AG04449 (cell line): ENCODE measurements at regions of chr6 and their contacts with region 1.

Region 1: GRCh38 chr6:33014841-33015634 is 5.6 kb upstream of the HLA-DOA start:
- DNase-seq: peak; percentile 55
- H3K4me3 ChIP-seq: no peak overlapping the region
- CTCF ChIP-seq: peak; percentile 61

Region 2: DNA sequence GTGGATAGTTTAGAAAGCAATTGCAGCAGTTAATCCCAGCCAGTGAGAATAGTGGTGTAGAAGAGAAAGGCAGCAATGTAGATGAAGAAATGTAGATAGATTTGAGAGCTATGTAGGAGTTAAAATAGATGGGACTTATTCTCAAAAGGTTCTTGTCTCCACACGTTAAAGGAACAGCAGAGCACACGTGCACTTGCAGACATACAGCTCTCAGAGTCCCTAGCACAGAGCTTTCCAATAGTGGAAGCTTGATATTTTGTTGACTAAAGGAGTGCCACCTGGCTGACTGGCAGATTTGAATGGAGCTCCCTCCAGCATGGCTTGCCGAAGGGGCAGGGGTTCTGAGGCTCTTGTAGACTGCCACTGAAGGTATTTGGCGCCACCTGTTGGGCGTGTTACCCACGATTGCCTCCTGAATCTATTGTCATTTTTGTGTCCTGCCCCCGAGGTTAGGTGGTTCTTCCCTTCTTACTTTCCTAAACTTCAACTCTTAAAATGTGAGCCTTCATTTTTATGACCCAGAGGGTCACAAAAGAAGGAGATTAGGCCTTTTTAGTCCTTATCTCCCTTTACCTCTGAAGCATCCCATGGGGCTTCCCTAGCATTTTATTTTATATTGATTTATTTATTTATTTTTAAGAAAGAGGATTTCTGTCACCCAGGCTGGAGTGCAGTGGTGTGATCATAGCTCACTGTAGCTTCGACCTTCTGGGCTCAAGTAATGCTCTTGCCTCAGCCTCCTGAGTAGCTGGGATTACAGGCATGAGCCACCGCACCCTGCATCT is 30.2 kb before region 1 on chr6:
- CTCF ChIA-PET with region 1: interaction called, 10 read pairs
- POLR2A ChIA-PET with region 1: no interaction called
- DNase-seq: no peak
- H3K4me3 ChIP-seq: no peak overlapping the region
- CTCF ChIP-seq: peak; percentile 82

Region 3: DNA sequence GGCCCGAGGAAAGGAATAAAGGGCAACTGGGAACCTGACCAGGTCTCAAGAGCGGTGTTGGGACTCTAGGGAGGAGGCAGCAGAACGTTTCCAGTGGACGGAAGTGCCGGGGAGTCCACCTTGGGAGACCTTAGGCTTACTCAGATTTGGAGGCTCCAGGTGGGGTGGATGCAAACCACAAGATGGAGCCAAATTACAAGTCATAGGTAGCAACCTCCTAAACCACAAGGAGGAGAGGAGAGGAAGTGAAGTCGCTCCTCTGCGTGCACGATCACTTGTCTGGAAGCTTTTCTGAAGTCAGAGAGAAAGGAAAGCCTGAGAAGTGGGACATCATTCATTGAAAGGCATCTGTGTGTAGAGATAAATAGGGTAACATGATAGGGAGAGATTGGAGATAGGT is 15.0 kb before region 1 on chr6:
- CTCF ChIA-PET with region 1: interaction called, 14 read pairs
- POLR2A ChIA-PET with region 1: no interaction called
- DNase-seq: no peak
- H3K4me3 ChIP-seq: no peak overlapping the region
- CTCF ChIP-seq: no peak

Region 4: DNA sequence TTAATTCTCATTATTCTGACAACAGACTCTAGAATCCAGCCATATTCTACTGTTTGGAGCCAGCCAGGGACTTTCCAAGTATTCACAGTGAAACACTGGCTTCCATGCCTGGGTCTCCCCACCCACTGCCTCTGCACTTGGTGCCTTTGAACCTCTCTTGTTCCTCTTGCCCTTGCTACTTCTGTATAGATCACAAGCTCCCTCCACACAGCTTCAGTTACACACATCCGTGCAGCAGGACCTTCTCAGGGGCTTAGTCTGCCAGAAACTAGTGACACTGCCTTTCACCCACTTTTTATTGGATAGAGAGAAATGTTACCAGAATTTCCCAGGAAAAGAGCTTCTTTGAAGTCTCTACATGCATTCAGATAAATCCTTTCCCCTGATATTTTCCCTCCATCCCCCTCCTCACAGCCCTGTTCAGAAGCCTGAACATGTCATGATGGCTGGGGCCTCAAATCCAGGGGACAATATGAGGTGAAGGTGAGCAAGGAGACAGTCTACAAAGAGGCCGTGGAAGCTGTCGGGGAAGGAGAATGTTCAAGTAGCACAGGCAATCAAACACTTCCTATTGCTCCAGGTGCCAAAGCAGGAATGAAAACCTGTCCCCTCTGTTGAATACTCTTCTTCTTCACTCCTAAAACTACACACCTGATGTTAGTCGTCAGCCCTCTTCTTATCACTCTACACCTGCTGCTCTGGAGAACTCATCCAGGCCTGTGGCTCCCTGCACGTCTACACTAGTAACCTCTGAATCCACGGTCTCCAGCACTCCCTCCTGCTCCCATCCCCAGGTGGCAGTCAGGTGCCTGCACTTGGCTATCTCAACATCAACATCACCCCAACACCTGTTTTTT is 14.5 kb after region 1 on chr6:
- CTCF ChIA-PET with region 1: interaction called, 14 read pairs
- POLR2A ChIA-PET with region 1: no interaction called
- DNase-seq: no peak
- H3K4me3 ChIP-seq: no peak overlapping the region
- CTCF ChIP-seq: no peak

Region 5: GRCh38 chr6:33082702-33083101 is 67.7 kb after region 1 on chr6:
- CTCF ChIA-PET with region 1: interaction called, 61 read pairs
- POLR2A ChIA-PET with region 1: no interaction called
- DNase-seq: no peak
- H3K4me3 ChIP-seq: no peak overlapping the region
- CTCF ChIP-seq: peak; percentile 58

Region 6: GRCh38 chr6:33147807-33148666 is 133.0 kb after region 1 on chr6:
- CTCF ChIA-PET with region 1: interaction called, 66 read pairs
- POLR2A ChIA-PET with region 1: no interaction called
- DNase-seq: no peak
- H3K4me3 ChIP-seq: no peak overlapping the region
- CTCF ChIP-seq: peak; percentile 69

Region 7: DNA sequence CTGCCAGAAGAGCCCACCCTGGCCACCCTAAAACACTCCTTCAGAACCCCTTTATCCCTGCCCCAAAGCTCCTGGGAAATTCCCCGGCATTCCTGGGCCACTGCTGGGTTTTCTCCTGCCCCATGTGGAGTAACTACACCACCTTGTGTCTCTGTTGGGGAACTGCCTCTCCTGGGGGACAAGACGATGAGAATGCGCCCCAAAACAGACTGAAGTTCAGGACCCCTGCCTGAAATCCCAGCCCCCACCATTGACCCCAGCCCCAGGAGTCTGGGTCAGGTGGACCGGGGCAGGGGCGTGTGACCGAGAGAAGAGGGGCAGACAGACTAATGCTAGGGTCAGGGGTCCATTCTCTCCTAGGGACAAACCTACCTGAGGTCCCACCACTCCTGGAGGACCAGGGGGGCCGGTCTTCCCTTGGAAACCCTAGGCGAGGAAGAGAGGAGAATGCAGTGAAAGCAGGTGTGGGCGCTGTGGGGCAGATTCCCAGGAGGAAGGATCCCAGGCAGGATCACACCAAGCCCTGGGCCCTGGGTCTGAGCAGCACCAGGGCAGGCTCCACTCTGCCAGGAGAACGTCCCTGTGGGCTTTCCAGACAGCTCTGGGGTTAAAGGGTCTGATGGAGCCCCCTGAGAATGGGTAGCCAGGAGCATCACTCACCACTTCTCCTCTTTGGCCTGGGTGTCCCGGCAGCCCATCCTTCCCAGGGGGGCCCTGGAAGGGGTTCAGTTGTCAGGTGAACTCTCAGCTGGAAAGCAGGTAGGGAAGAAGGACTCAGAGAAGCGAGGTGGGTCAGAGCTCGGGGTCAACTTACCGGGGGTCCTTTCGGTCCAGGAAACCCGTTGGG is 157.9 kb after region 1 on chr6:
- CTCF ChIA-PET with region 1: interaction called, 44 read pairs
- POLR2A ChIA-PET with region 1: no interaction called
- DNase-seq: no peak
- H3K4me3 ChIP-seq: no peak overlapping the region
- CTCF ChIP-seq: peak; percentile 67